ENCODE measurements at regions of chr15 and their contacts with region 1.

Region 1: GRCh38 chr15:101008158-101009139 is 89.3 kb downstream of the LRRK1 start:
- DNase-seq: peak; percentile 87
- ATAC-seq: peak; percentile 95
- H3K4me3 Mint-ChIP-seq: peak overlapping the region; percentile 82
- H3K27ac Mint-ChIP-seq: no peak overlapping the region
- H3K4me1 Mint-ChIP-seq: peaks cover 23% of the 10 kb centered on the region
- H3K27me3 Mint-ChIP-seq: peaks cover 26% of the 10 kb centered on the region

Region 2: GRCh38 chr15:100341662-100342560 is 666.5 kb before region 1 on chr15 and contains the start of gene ADAMTS17:
- CTCF ChIA-PET with region 1: interaction called, 11 read pairs
- DNase-seq: peak; percentile 95
- ATAC-seq: peak; percentile 95
- H3K4me3 Mint-ChIP-seq: peak within 1 kb of the TSS; percentile 35
- H3K27ac Mint-ChIP-seq: no peak within 1 kb of the TSS
- H3K4me1 Mint-ChIP-seq: peaks cover 15% of the 10 kb centered on the region
- H3K27me3 Mint-ChIP-seq: peaks cover 49% of the 10 kb centered on the region
- total RNA-seq, gene ADAMTS17: 1.6 to 1.9 TPM

Region 3: GRCh38 chr15:100833417-100834389 is 174.7 kb before region 1 on chr15:
- CTCF ChIA-PET with region 1: no interaction called
- DNase-seq: no peak
- ATAC-seq: no peak
- H3K4me3 Mint-ChIP-seq: no peak overlapping the region
- H3K27ac Mint-ChIP-seq: no peak overlapping the region
- H3K4me1 Mint-ChIP-seq: no peaks in the 10 kb centered on the region
- H3K27me3 Mint-ChIP-seq: peaks cover 24% of the 10 kb centered on the region

Region 4: DNA sequence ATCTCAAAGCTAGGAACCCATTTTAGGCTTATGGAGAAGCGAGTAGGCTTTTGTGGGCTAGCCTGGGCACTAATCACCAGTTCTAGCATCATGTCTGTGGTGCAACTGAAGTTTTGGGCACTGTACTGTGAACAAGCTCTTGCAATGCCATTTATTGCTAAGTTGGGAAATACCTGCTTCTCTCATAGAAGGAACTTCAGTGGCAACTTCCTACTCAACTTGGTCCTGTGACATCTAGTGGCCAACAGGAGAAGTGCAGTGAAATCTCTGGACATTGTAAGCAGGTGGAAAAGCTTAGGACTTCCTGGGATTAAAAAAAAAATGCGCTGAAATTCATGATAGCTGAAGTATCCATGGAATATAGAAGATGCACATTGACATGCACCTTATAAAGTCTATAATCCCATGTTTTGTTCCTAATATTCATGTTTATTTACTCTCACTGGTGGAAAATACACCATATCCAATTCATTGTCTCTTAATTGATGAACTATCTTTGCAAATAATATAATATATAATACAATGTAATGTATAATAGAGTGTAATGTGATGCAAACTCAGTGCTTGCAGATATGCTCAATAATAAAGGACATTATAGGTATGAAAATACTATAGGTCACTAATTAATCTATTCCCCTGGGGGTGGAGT is 135.3 kb before region 1 on chr15:
- CTCF ChIA-PET with region 1: interaction called, 16 read pairs
- DNase-seq: peak; percentile 61
- ATAC-seq: peak; percentile 53
- H3K4me3 Mint-ChIP-seq: no peak overlapping the region
- H3K27ac Mint-ChIP-seq: no peak overlapping the region
- H3K4me1 Mint-ChIP-seq: no peaks in the 10 kb centered on the region
- H3K27me3 Mint-ChIP-seq: peaks cover 27% of the 10 kb centered on the region

Region 5: GRCh38 chr15:101024073-101024695 is 15.7 kb after region 1 on chr15:
- CTCF ChIA-PET with region 1: interaction called, 78 read pairs
- DNase-seq: peak; percentile 25
- ATAC-seq: no peak
- H3K4me3 Mint-ChIP-seq: no peak overlapping the region
- H3K27ac Mint-ChIP-seq: no peak overlapping the region
- H3K4me1 Mint-ChIP-seq: no peaks in the 10 kb centered on the region
- H3K27me3 Mint-ChIP-seq: peaks cover 2% of the 10 kb centered on the region

Region 6: GRCh38 chr15:101156509-101157159 is 148.2 kb after region 1 on chr15:
- CTCF ChIA-PET with region 1: no interaction called
- DNase-seq: no peak
- ATAC-seq: no peak
- H3K4me3 Mint-ChIP-seq: no peak overlapping the region
- H3K27ac Mint-ChIP-seq: no peak overlapping the region
- H3K4me1 Mint-ChIP-seq: peaks cover 28% of the 10 kb centered on the region
- H3K27me3 Mint-ChIP-seq: peaks cover 2% of the 10 kb centered on the region

Region 7: DNA sequence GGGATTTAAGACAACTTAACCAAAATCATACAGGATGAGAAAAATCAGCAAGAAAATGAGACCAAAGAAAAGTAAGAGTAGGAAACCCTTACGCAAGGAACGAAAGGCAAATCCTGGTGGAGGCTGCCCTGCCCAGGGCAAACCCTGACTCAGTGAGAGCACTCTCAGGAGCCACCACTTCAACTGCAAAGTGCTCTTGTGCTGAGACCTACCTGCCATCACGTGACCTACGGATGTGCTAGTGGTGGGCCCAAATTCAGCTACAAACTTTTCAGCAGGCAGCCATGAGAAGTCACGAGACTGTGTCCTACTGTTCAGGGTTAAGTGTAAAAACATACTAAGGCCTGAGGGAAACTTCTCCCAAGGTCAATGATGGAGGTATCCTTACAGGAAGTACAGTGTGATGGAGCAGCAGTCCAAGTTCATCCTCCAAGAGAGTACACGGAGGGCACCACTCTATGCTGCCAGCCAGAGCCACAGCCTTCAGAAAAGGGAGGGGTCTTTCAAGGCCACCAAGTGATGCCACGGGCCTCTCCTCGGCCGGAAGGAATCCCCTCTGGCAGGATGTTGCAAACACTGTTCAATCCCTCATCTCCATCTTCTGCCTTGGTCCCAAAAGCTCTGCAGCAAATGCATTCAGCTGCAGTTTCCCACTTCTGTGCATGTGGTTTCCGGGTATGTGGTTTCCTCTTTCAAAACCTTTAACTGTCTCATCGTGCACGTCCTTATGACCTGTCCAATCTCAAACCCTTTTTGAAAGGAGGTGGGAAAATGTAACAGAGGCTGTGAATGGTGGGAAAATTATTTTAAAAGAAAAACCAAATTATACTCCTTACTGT is 233.9 kb after region 1 on chr15:
- CTCF ChIA-PET with region 1: interaction called, 10 read pairs
- DNase-seq: peak; percentile 91
- ATAC-seq: peak; percentile 78
- H3K4me3 Mint-ChIP-seq: peak overlapping the region; percentile 62
- H3K27ac Mint-ChIP-seq: peak overlapping the region; percentile 91
- H3K4me1 Mint-ChIP-seq: peaks cover 94% of the 10 kb centered on the region
- H3K27me3 Mint-ChIP-seq: no peaks in the 10 kb centered on the region

Region 8: GRCh38 chr15:101277038-101277882 is 268.8 kb after region 1 on chr15 and contains the start of gene SELENOS:
- CTCF ChIA-PET with region 1: interaction called, 38 read pairs
- DNase-seq: peak; percentile 88
- ATAC-seq: peak; percentile 93
- H3K4me3 Mint-ChIP-seq: peak within 1 kb of the TSS; percentile 100
- H3K27ac Mint-ChIP-seq: peak within 1 kb of the TSS; percentile 99
- H3K4me1 Mint-ChIP-seq: peaks cover 30% of the 10 kb centered on the region
- H3K27me3 Mint-ChIP-seq: no peaks in the 10 kb centered on the region
- total RNA-seq, gene SELENOS: 33.1 to 49.0 TPM

Region 9: DNA sequence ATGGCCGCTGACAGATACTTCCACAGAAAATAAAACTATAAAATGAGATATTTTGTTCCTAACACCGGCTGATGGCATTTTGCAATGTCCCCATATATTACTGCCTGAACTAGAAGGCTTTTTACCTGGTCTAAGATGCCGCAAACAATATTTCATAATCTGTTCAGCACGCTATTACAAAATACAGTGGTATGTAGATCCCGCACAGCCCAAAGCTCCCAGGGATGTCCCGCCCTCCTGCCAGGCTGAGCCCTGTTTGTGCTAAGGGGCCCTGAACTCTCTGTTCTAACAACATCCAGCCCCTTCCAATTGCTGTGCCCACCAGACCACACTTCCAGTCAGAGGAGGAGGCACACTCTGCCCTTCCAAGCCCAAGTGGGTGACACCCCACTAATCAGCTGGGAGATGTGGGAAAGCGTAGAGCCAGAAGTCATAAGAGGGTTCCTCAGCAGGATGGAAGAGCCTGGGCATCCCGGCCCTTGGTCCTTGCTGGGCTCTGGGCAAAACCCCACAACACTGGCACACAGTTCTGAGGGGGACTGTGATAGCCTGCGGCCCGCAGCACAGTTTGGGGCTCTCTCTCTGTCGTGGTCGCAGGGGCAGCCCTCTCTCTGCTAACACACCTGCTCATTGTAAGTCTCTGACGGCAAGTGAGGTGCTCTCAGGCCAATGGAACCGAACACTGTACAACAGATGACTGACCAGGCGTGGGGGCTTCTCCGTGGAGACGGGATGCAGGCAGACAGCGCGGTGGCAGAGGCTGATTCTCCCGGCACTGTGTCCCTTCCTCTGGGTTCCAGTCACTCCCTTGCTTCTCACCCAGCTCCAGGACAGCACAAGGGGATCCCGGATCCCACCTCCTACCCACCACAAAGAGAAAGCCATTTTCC is 425.8 kb after region 1 on chr15:
- CTCF ChIA-PET with region 1: no interaction called
- DNase-seq: peak; percentile 35
- ATAC-seq: no peak
- H3K4me3 Mint-ChIP-seq: no peak overlapping the region
- H3K27ac Mint-ChIP-seq: no peak overlapping the region
- H3K4me1 Mint-ChIP-seq: no peaks in the 10 kb centered on the region
- H3K27me3 Mint-ChIP-seq: peaks cover 2% of the 10 kb centered on the region